ENCODE measurements at regions of chr14 and their contacts with region 1.

Region 1: DNA sequence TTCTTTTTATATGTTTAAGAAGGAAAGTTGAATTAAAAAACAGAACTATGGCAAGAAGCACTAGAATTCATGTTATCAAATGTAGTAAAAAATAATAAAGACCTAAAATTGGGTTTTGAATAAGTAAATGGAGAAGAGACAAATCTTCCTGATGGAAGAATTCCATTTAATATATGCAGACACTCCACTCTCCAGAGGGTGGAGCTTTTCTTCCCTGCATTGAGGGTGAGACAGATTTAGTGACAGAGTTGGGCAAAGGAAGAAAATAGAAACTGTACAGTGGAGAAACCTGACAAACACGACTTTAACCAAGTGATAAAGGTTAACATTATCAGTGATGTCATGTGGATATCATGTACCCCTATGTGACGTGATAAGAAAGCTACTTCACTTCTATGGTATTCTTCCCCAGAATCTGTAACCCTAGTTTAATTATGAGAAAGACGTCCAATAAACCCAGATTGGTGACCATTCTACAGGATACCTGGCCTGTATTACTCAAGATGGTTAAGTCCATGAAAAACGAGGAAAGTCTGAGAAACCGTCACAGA is 217.6 kb downstream of the PRKD1 start:
- DNase-seq: peak; percentile 6
- H3K4me3 ChIP-seq: no peak overlapping the region
- H3K27ac ChIP-seq: no peak overlapping the region
- H3K4me1 ChIP-seq: no peaks in the 10 kb centered on the region
- H3K27me3 ChIP-seq: no peaks in the 10 kb centered on the region
- CTCF ChIP-seq: no peak
- POLR2A ChIP-seq: no peak

Region 2: GRCh38 chr14:29671034-29671433 is 39.1 kb before region 1 on chr14:
- CTCF ChIA-PET with region 1: no interaction called
- POLR2A ChIA-PET with region 1: no interaction called
- dilution Hi-C with region 1: no loop called
- intact Hi-C with region 1: no loop called
- DNase-seq: no peak
- H3K4me3 ChIP-seq: no peak overlapping the region
- H3K27ac ChIP-seq: no peak overlapping the region
- H3K4me1 ChIP-seq: no peaks in the 10 kb centered on the region
- H3K27me3 ChIP-seq: no peaks in the 10 kb centered on the region
- CTCF ChIP-seq: no peak
- POLR2A ChIP-seq: no peak

Region 3: DNA sequence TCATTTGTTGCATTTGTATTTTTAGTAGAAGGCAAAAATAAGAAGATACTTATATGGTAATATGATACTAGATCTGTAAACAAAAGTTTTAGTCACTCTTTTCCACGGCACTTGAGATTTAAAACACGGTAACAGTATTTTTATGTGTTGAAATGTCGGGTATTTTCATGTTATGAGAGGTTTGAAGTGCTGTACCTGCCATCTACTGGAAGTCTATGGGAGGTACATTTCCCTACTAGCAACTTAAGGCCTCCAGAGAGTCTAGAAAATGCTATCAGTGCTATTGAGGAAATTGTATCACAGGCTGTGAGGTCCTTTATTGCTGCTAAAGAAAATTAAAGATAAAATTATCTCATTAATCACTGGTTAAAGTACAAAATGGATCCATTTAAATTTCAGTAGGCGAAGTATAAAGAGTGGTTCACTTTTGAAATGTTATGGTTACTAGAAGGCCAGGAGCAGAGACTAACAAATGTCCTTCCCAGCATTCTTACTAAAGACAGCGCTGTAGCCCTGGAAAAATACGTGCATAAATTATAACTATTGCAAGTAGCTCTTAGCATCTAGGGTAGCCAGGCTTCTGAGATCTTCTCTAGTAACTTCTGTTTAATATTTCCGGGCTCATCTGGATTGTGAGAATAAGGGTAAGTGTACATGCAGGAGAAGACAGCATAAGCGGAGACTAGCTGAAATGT is 295.2 kb after region 1 on chr14:
- CTCF ChIA-PET with region 1: no interaction called
- POLR2A ChIA-PET with region 1: no interaction called
- dilution Hi-C with region 1: no loop called
- intact Hi-C with region 1: loop called (anchors 1 kb)
- DNase-seq: peak; percentile 53
- H3K4me3 ChIP-seq: no peak overlapping the region
- H3K27ac ChIP-seq: no peak overlapping the region
- H3K4me1 ChIP-seq: no peaks in the 10 kb centered on the region
- H3K27me3 ChIP-seq: peaks cover 0 to 6% of the 10 kb centered on the region in 2 experiments
- CTCF ChIP-seq: peak; percentile 29 to 56
- POLR2A ChIP-seq: no peak

Measured in endothelial cell of umbilical vein (primary cell).